ENCODE measurements at regions of chr14 and their contacts with region 1.

Region 1: GRCh38 chr14:80987235-80988032 is 32.0 kb downstream of the TSHR start:
- DNase-seq: peak; percentile 92
- H3K4me3 Mint-ChIP-seq: no peak overlapping the region
- H3K27ac Mint-ChIP-seq: no peak overlapping the region
- H3K4me1 Mint-ChIP-seq: peaks cover 8% of the 10 kb centered on the region
- H3K27me3 Mint-ChIP-seq: peaks cover 17% of the 10 kb centered on the region

Region 2: GRCh38 chr14:80930836-80931389 is 56.5 kb before region 1 on chr14:
- intact Hi-C with region 1: loop called (anchors 10 kb)
- DNase-seq: peak; percentile 87
- H3K4me3 Mint-ChIP-seq: peak overlapping the region; percentile 73
- H3K27ac Mint-ChIP-seq: peak overlapping the region; percentile 90
- H3K4me1 Mint-ChIP-seq: peaks cover 51% of the 10 kb centered on the region
- H3K27me3 Mint-ChIP-seq: no peaks in the 10 kb centered on the region

Region 3: GRCh38 chr14:80965037-80965436 is 22.4 kb before region 1 on chr14:
- intact Hi-C with region 1: no loop called
- DNase-seq: no peak
- H3K4me3 Mint-ChIP-seq: no peak overlapping the region
- H3K27ac Mint-ChIP-seq: no peak overlapping the region
- H3K4me1 Mint-ChIP-seq: peaks cover 9% of the 10 kb centered on the region
- H3K27me3 Mint-ChIP-seq: peaks cover 31% of the 10 kb centered on the region

Region 4: DNA sequence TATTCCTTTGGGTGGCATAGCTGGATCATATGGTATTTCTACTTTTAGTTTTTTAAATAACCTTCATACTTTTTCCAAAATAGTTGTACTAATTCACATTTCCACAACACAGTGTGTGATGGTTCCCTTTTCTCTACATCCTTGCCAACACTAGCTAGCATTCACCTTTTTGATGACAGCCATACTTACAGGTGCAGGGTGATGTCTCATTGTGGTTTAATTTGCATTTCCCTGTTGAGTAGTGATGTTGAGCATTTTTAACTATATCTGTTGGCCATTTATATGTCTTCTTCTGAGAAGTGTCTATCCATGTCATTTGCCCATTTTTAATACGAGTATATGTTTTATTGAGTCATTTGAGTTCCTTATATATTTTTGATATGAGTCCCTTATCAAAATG is 64.1 kb after region 1 on chr14:
- intact Hi-C with region 1: no loop called
- DNase-seq: no peak
- H3K4me3 Mint-ChIP-seq: no peak overlapping the region
- H3K27ac Mint-ChIP-seq: no peak overlapping the region
- H3K4me1 Mint-ChIP-seq: no peaks in the 10 kb centered on the region
- H3K27me3 Mint-ChIP-seq: no peaks in the 10 kb centered on the region

Region 5: DNA sequence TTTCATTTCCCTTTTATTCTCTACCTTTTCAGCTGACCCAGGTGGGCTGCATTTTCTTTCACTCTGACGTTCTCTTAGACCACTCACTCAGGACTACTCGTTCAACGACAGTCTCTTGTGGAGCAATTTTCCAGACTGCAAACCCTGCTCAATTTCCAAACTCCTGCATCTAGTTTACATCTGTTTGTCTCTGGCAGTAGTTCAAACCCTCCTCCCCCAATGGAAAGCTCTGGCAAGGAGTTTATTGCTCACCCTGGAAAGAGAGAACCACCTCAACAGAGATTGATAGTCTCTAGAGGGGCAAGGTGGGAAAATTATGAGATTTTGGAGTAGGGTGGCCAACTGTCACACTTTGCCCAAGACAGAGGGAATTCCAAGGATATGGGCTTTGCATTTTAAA is 98.2 kb after region 1 on chr14:
- intact Hi-C with region 1: no loop called
- DNase-seq: no peak
- H3K4me3 Mint-ChIP-seq: no peak overlapping the region
- H3K27ac Mint-ChIP-seq: no peak overlapping the region
- H3K4me1 Mint-ChIP-seq: no peaks in the 10 kb centered on the region
- H3K27me3 Mint-ChIP-seq: no peaks in the 10 kb centered on the region

Region 6: GRCh38 chr14:81565441-81566290 is 578.2 kb after region 1 on chr14:
- intact Hi-C with region 1: no loop called
- DNase-seq: no peak
- H3K4me3 Mint-ChIP-seq: no peak overlapping the region
- H3K27ac Mint-ChIP-seq: no peak overlapping the region
- H3K4me1 Mint-ChIP-seq: no peaks in the 10 kb centered on the region
- H3K27me3 Mint-ChIP-seq: no peaks in the 10 kb centered on the region

Measured in activated CD4-positive, alpha-beta T cell treated with anti-CD3 and anti-CD28 coated beads, Interleukin-2, amount 10 ng/mL, durations not matched to agents 24 days and 14 days (primary cell).